ENCODE measurements at regions of chr16 and their contacts with region 1.

Region 1: DNA sequence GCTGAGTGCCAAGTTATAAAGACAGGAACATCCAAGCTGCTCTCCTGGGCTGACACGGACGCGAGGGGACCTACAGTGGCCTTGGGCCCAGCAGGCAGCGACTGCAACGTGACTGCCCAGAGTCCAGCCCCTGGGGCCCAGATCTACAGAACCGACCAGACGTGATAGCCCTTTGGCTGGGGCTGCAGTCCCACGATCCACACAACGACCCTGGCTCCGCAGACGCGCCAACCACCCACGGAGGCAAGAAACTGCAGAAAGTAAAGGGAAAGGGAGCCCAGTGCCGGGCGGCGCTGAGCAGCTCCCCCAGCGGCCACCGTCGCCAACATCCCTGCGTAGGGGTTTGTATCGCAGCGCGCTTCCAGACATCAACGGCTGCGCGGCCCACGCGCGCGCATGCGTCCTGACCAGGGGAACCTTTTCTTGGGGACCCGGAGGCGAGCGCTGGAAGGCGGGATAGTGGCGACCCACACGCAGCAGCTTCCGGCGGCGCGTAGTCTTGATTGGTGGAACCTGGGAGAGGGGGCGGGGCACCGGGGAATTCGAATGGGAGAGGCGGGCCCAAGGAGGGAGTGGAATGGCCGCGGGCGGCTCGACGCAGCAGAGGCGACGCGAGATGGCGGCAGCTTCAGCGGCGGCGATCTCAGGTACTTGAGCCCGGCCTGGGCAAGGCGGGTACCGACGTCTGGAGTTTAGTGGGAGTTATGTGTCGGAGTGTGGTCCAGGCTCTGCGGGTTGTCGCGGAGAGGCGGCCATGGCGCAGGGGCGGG is at the start of gene KIF22:
- DNase-seq: peak; percentile 100
- H3K4me3 Mint-ChIP-seq: peak within 1 kb of the TSS; percentile 99
- H3K27ac Mint-ChIP-seq: peak within 1 kb of the TSS; percentile 98
- H3K4me1 Mint-ChIP-seq: peaks cover 50% of the 10 kb centered on the region
- H3K27me3 Mint-ChIP-seq: no peaks in the 10 kb centered on the region
- total RNA-seq, gene KIF22: 244 to 253 TPM

Region 2: DNA sequence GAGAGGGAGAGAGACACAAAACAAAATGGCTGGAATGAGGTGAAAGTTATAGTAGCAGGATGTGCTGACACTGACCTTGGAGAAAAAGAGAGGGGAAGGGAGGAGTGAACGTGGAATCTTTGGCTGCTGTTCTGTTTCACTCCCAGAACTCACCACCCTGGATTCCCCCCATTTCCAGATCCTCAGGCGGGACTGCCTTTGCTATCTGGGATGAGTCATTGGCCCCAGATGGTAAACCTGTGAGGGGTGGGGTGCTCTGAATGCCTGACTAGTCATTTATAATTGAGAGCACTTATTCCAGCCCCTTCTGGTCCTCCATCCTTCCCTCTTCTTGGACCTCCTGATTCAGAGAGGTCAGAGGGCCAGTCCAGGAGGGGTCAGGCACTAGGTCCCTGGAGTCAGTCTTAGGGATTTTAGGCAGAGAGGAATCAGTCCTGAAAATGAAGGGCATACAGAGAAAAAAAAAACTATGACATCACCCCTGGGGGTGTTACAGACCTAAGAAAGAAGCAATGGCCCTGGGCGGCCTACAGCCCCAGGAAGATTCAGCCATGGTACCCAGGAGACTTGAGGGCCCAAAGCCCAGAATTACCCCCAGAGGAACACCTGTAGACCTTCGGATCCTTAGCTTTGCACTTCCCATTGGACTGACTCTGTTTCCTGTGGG is 14.5 kb before region 1 on chr16:
- CTCF ChIA-PET with region 1: interaction called, 20 read pairs
- POLR2A ChIA-PET with region 1: no interaction called
- DNase-seq: no peak
- H3K4me3 Mint-ChIP-seq: no peak overlapping the region
- H3K27ac Mint-ChIP-seq: no peak overlapping the region
- H3K4me1 Mint-ChIP-seq: peaks cover 8% of the 10 kb centered on the region
- H3K27me3 Mint-ChIP-seq: peaks cover 10% of the 10 kb centered on the region

Region 3: GRCh38 chr16:29815793-29816693 is 25.7 kb after region 1 on chr16 and contains the start of gene PAGR1:
- CTCF ChIA-PET with region 1: interaction called, 46 read pairs
- POLR2A ChIA-PET with region 1: no interaction called
- DNase-seq: peak; percentile 99
- H3K4me3 Mint-ChIP-seq: peak within 1 kb of the TSS; percentile 91
- H3K27ac Mint-ChIP-seq: peak within 1 kb of the TSS; percentile 96
- H3K4me1 Mint-ChIP-seq: peaks cover 71% of the 10 kb centered on the region
- H3K27me3 Mint-ChIP-seq: peaks cover 13% of the 10 kb centered on the region
- total RNA-seq, gene PAGR1: 26.8 to 29.6 TPM